Activated CD8-positive, alpha-beta memory T cell treated with anti-CD3 and anti-CD28 coated beads, Interleukin-2, amount 10 ng/mL, durations not matched to agents 7 days and 5 days (primary cell): ENCODE measurements at regions of chr10 and their contacts with region 1.

Region 1: GRCh38 chr10:17430647-17431355 is 23.6 kb downstream of the ST8SIA6 start:
- DNase-seq: peak; percentile 64
- ATAC-seq: no peak
- H3K4me3 Mint-ChIP-seq: no peak overlapping the region
- H3K27ac Mint-ChIP-seq: no peak overlapping the region
- H3K4me1 Mint-ChIP-seq: peaks cover 47% of the 10 kb centered on the region
- H3K27me3 Mint-ChIP-seq: peaks cover 35% of the 10 kb centered on the region

Region 2: GRCh38 chr10:17375936-17376584 is 54.7 kb before region 1 on chr10:
- CTCF ChIA-PET with region 1: no interaction called
- DNase-seq: no peak
- ATAC-seq: no peak
- H3K4me3 Mint-ChIP-seq: no peak overlapping the region
- H3K27ac Mint-ChIP-seq: no peak overlapping the region
- H3K4me1 Mint-ChIP-seq: no peaks in the 10 kb centered on the region
- H3K27me3 Mint-ChIP-seq: peaks cover 5% of the 10 kb centered on the region

Region 3: GRCh38 chr10:17409170-17409733 is 21.5 kb before region 1 on chr10:
- CTCF ChIA-PET with region 1: interaction called, 13 read pairs
- DNase-seq: no peak
- ATAC-seq: no peak
- H3K4me3 Mint-ChIP-seq: no peak overlapping the region
- H3K27ac Mint-ChIP-seq: no peak overlapping the region
- H3K4me1 Mint-ChIP-seq: peaks cover 1% of the 10 kb centered on the region
- H3K27me3 Mint-ChIP-seq: peaks cover 4% of the 10 kb centered on the region

Region 4: GRCh38 chr10:17443707-17444387 is 13.0 kb after region 1 on chr10:
- CTCF ChIA-PET with region 1: interaction called, 12 read pairs
- DNase-seq: peak; percentile 58
- ATAC-seq: peak; percentile 94
- H3K4me3 Mint-ChIP-seq: peak overlapping the region; percentile 38
- H3K27ac Mint-ChIP-seq: peak overlapping the region; percentile 54
- H3K4me1 Mint-ChIP-seq: peaks cover 13% of the 10 kb centered on the region
- H3K27me3 Mint-ChIP-seq: peaks cover 41% of the 10 kb centered on the region

Region 5: GRCh38 chr10:17673456-17674061 is 242.8 kb after region 1 on chr10:
- CTCF ChIA-PET with region 1: no interaction called
- DNase-seq: no peak
- ATAC-seq: peak; percentile 62
- H3K4me3 Mint-ChIP-seq: no peak overlapping the region
- H3K27ac Mint-ChIP-seq: peak overlapping the region; percentile 45
- H3K4me1 Mint-ChIP-seq: peaks cover 41% of the 10 kb centered on the region
- H3K27me3 Mint-ChIP-seq: no peaks in the 10 kb centered on the region